Activated CD4-positive, alpha-beta memory T cell treated with anti-CD3 and anti-CD28 coated beads for 36 hours (primary cell): ENCODE measurements at regions of chr16 and their contacts with region 1.

Region 1: DNA sequence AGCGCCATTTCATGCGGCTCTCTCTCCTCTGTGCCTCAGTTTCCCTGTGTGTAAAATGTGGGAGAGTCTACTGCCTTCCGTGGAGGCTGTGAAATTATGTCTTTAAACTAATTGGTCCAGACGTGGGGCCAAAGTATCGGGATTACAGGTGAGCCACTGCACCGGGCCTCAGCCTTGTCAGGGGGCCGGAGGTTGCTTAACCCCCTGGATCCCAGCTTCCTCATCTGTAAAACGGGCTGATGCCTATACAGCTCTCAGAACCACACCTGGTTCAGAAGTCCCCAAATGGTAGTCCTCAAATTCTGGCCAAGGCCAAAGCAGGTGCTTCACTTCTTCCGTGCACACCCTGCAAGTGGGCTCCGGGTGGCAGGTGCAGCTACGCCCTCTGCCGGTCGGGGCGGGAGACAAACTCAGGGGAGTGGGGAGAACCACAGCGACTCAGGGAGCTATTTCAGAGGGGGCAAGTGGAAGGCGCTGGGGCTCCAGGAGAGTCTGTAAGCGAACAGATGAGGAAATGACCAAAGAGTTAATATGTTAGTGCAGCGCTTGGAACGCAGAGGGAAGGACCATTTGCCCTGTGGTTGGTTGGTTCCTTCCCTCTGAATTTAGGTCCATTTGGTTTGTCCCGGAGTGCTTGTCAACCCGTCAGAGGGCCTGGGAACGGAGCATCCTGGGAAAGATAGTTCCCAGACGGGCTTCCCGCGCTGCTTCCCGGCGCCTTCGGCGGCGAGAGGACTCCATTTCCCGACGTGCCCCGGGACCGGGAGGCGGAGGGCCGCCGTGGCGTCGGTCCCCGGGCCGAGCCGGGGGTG is at the start of gene MGRN1:
- DNase-seq: peak; percentile 96
- H3K4me3 Mint-ChIP-seq: peak within 1 kb of the TSS; percentile 99
- H3K27ac Mint-ChIP-seq: peak within 1 kb of the TSS; percentile 98
- H3K4me1 Mint-ChIP-seq: peaks cover 28% of the 10 kb centered on the region
- H3K27me3 Mint-ChIP-seq: no peaks in the 10 kb centered on the region
- total RNA-seq, gene MGRN1: 72.7 to 73.2 TPM

Region 2: GRCh38 chr16:4529085-4530060 is 94.8 kb before region 1 on chr16:
- CTCF ChIA-PET with region 1: no interaction called
- POLR2A ChIA-PET with region 1: no interaction called
- intact Hi-C with region 1: no loop called
- DNase-seq: peak; percentile 43
- H3K4me3 Mint-ChIP-seq: peak overlapping the region; percentile 20
- H3K27ac Mint-ChIP-seq: peak overlapping the region; percentile 84
- H3K4me1 Mint-ChIP-seq: peaks cover 22% of the 10 kb centered on the region
- H3K27me3 Mint-ChIP-seq: no peaks in the 10 kb centered on the region

Region 3: DNA sequence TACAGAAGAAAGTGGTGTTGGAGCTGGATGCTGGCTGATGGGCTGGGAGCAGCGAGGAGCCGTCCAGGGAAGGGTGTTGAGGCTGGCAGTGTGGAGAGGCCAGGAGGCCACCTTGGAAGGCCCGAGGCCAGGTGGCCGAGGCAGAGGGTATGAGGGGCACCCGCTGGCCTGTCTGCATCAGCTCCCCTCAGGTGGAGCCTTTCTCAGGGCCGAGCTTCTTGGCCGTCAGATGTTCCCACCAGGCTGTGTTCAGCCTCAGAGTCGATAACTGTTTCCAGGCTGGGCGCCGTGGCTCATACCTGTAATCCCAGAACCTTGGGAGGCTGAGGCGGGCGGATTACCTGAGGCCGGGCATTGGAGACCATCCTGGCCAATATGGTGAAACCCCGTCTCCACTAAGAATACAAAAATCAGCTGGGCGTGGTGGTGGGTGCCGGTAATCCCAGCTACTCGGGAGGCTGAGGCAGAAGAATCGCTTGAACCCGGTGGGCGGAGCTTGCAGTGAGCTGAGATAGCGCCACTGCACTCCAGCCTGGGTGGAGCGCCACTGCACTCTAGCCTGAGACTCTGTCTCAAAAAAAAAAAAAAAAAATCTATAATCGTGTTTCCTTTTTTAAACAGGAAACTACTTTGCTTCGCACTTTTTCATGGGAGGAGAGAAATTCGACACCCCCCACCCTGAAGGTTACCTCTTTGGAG is 25.7 kb after region 1 on chr16:
- CTCF ChIA-PET with region 1: interaction called, 32 read pairs
- POLR2A ChIA-PET with region 1: no interaction called
- intact Hi-C with region 1: no loop called
- DNase-seq: no peak
- H3K4me3 Mint-ChIP-seq: no peak overlapping the region
- H3K27ac Mint-ChIP-seq: no peak overlapping the region
- H3K4me1 Mint-ChIP-seq: peaks cover 30% of the 10 kb centered on the region
- H3K27me3 Mint-ChIP-seq: no peaks in the 10 kb centered on the region

Region 4: GRCh38 chr16:4693296-4693955 is 69.2 kb after region 1 on chr16 and contains the start of gene NUDT16L1:
- CTCF ChIA-PET with region 1: interaction called, 3 read pairs
- POLR2A ChIA-PET with region 1: no interaction called
- intact Hi-C with region 1: loop called (anchors 1 kb)
- DNase-seq: peak; percentile 98
- H3K4me3 Mint-ChIP-seq: peak within 1 kb of the TSS; percentile 79
- H3K27ac Mint-ChIP-seq: peak within 1 kb of the TSS; percentile 69
- H3K4me1 Mint-ChIP-seq: peaks cover 13% of the 10 kb centered on the region
- H3K27me3 Mint-ChIP-seq: no peaks in the 10 kb centered on the region
- total RNA-seq, gene NUDT16L1: 22.2 to 23.6 TPM

Region 5: GRCh38 chr16:4734063-4734729 is 110.0 kb after region 1 on chr16 and contains the starts of genes ANKS3 and DNAAF8:
- CTCF ChIA-PET with region 1: interaction called, 11 read pairs
- POLR2A ChIA-PET with region 1: no interaction called
- intact Hi-C with region 1: no loop called
- DNase-seq: peak; percentile 86
- H3K4me3 Mint-ChIP-seq: peak within 1 kb of the TSS; percentile 86
- H3K27ac Mint-ChIP-seq: peak within 1 kb of the TSS; percentile 69
- H3K4me1 Mint-ChIP-seq: peaks cover 17% of the 10 kb centered on the region
- H3K27me3 Mint-ChIP-seq: no peaks in the 10 kb centered on the region
- total RNA-seq, gene ANKS3: 11.7 to 13.3 TPM
- total RNA-seq, gene DNAAF8: 0.31 TPM in 1 of 2 experiments, not detected in the other

Region 6: GRCh38 chr16:4900036-4900435 is 275.8 kb after region 1 on chr16:
- CTCF ChIA-PET with region 1: no interaction called
- POLR2A ChIA-PET with region 1: no interaction called
- intact Hi-C with region 1: no loop called
- DNase-seq: no peak
- H3K4me3 Mint-ChIP-seq: no peak overlapping the region
- H3K27ac Mint-ChIP-seq: no peak overlapping the region
- H3K4me1 Mint-ChIP-seq: no peaks in the 10 kb centered on the region
- H3K27me3 Mint-ChIP-seq: peaks cover 12% of the 10 kb centered on the region